GM10248 (cell line): ENCODE measurements at regions of chr20 and their contacts with region 1.

Region 1: GRCh38 chr20:833450-834150 is at the start of gene FAM110A:
- DNase-seq: peak; percentile 96
- CTCF ChIP-seq: no peak

Region 2: GRCh38 chr20:844473-845225 is 11.0 kb after region 1 on chr20:
- CTCF ChIA-PET with region 1: interaction called, 11 read pairs
- POLR2A ChIA-PET with region 1: interaction called, 3 read pairs
- DNase-seq: peak; percentile 96
- CTCF ChIP-seq: no peak